Activated CD4-positive, alpha-beta T cell treated with anti-CD3 and anti-CD28 coated beads, Interleukin-2, amount 10 ng/mL, durations not matched to agents 24 days and 14 days (primary cell): ENCODE measurements at regions of chr13 and their contacts with region 1.

Region 1: GRCh38 chr13:42110410-42111155 is 62.1 kb downstream of the DGKH start:
- DNase-seq: peak; percentile 87
- H3K4me3 Mint-ChIP-seq: no peak overlapping the region
- H3K27ac Mint-ChIP-seq: peak overlapping the region; percentile 51
- H3K4me1 Mint-ChIP-seq: peaks cover 11% of the 10 kb centered on the region
- H3K27me3 Mint-ChIP-seq: no peaks in the 10 kb centered on the region

Region 2: GRCh38 chr13:41352935-41353840 is 757.4 kb before region 1 on chr13:
- intact Hi-C with region 1: loop called (anchors 10 kb)
- DNase-seq: peak; percentile 89
- H3K4me3 Mint-ChIP-seq: no peak overlapping the region
- H3K27ac Mint-ChIP-seq: peak overlapping the region; percentile 81
- H3K4me1 Mint-ChIP-seq: peaks cover 34% of the 10 kb centered on the region
- H3K27me3 Mint-ChIP-seq: no peaks in the 10 kb centered on the region

Region 3: DNA sequence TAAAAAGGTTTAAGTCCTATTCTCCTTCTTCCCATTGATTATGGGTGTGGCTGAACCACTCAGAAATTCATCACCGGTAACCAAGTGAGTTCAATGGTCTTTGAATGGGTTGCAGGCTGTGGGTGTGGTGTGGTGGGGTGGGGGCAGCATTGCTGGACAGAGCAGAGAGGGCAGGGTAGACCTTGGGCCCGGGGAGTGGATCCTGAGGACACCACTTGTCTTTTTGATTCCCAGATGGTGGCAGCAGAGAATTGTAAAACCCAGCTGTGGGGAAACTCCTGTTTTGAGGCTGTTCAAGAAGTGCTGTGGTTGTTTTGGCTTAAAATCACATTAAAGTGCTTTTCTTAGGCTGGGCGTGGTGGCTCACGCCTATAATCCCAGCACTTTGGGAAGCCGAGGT is 699.1 kb before region 1 on chr13:
- intact Hi-C with region 1: loop called (anchors 1 kb)
- DNase-seq: peak; percentile 72
- H3K4me3 Mint-ChIP-seq: no peak overlapping the region
- H3K27ac Mint-ChIP-seq: no peak overlapping the region
- H3K4me1 Mint-ChIP-seq: no peaks in the 10 kb centered on the region
- H3K27me3 Mint-ChIP-seq: peaks cover 9% of the 10 kb centered on the region

Region 4: GRCh38 chr13:41668130-41668757 is 442.3 kb before region 1 on chr13:
- intact Hi-C with region 1: loop called (anchors 1 kb)
- DNase-seq: peak; percentile 85
- H3K4me3 Mint-ChIP-seq: no peak overlapping the region
- H3K27ac Mint-ChIP-seq: no peak overlapping the region
- H3K4me1 Mint-ChIP-seq: peaks cover 7% of the 10 kb centered on the region
- H3K27me3 Mint-ChIP-seq: no peaks in the 10 kb centered on the region

Region 5: DNA sequence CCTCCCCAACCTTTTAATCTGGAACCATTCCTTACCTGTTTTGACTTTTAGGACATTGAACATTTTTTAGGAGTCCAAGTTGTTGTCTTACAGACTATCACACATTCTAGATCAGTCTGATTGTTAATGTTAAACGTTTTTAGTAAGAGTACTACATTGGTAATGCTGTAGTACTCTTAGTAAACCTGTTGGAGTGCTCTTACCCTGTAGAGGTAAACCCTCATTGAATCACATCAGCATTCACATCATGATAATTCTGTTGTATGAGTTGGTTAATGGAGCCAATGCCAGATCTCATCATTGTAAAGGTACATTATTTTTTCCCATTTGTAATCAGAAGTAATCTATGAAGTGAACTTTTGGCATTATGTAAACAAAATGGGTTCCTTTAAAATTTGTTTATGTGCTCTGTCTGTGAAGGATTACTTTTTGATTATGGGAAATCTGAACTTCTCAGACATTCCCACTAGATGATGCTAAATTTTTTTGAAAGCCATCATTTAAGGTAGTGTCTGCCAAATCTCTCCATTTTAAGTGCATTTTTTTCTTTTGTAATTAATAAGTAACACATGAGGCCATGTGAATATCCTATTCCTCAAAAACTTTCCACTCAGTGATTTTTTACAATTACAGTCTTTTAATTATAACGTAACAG is 204.9 kb before region 1 on chr13:
- intact Hi-C with region 1: loop called (anchors 1 kb)
- DNase-seq: no peak
- H3K4me3 Mint-ChIP-seq: no peak overlapping the region
- H3K27ac Mint-ChIP-seq: no peak overlapping the region
- H3K4me1 Mint-ChIP-seq: peaks cover 9% of the 10 kb centered on the region
- H3K27me3 Mint-ChIP-seq: no peaks in the 10 kb centered on the region